ENCODE measurements at regions of chr16 and their contacts with region 1.

Region 1: DNA sequence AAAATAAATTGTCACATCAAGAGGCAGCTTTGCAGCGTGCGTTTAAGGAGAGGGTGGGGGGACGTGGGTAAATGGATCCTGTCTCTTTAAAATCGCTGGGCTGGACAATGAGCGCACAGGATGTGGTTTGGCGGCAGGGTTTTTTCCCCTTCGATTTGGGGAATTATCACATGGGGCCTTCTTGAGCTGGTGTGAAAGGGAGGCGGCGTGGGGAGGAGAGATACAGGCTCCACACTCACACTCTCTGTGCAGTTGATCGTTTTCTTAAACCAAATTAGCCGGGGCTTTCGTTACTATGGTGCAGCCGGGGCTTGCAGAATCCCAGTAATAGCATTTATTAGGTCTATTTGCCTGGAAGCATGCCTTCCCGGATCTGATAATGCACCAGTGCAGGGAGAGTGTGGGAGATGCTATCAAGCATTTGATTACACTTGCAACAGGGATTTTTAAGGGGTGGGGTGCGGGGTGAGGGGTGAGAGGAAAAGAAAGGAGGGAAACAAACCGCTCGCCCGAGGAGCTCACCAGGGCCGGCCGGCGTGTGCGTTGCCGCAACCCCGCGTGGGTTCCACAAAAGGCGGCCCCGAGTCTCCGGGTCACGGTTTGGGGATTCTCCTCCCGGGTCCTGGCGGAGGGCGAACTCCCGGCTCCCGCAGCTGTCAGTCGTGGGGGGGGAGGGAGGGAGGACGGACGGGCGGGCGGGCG is 58.9 kb upstream of the GSE1 start:
- DNase-seq: no peak
- H3K4me3 ChIP-seq: peak overlapping the region; percentile 74 to 85 (median 82)
- H3K27ac ChIP-seq: peak overlapping the region; percentile 79 to 88 (median 84)
- H3K4me1 ChIP-seq: peaks cover 31 to 75% (median 60%) of the 10 kb centered on the region in 4 donors
- H3K27me3 ChIP-seq: no peaks in the 10 kb centered on the region
- CTCF ChIP-seq: no peak
- EP300 ChIP-seq: no peak
- POLR2A ChIP-seq: no peak

Region 2: DNA sequence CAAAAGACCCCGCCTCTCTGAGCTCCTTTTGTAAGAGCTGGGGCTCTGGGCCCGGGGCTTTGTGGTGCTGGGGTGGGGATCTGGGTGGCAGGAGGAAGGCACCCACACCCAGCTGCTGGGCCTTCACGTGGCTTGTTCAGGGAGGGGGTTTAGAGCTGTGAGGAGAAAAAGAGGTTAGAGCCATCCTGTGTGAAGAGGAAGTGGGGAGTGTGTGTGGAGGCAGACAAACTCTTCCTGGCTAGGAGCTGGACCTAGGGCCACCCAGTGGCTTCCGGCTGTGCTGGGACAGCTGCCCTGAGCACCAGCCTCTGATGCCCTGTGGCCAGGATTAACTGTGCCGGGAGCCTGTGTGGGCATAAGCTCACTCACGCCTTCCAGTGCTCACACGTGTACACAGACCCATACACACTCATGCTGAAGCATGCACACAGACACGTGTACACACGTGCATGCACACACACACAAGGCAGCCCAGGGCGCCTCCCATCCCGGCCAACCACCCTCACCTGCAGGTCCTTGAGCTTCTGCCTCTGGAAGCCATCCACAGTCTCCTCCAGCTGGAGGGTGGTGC is 449.4 kb before region 1 on chr16:
- intact Hi-C with region 1: no loop called
- DNase-seq: no peak
- H3K4me3 ChIP-seq: no peak overlapping the region
- H3K27ac ChIP-seq: no peak overlapping the region
- H3K4me1 ChIP-seq: no peaks in the 10 kb centered on the region
- H3K27me3 ChIP-seq: no peaks in the 10 kb centered on the region
- CTCF ChIP-seq: no peak
- EP300 ChIP-seq: no peak
- POLR2A ChIP-seq: no peak

Region 3: DNA sequence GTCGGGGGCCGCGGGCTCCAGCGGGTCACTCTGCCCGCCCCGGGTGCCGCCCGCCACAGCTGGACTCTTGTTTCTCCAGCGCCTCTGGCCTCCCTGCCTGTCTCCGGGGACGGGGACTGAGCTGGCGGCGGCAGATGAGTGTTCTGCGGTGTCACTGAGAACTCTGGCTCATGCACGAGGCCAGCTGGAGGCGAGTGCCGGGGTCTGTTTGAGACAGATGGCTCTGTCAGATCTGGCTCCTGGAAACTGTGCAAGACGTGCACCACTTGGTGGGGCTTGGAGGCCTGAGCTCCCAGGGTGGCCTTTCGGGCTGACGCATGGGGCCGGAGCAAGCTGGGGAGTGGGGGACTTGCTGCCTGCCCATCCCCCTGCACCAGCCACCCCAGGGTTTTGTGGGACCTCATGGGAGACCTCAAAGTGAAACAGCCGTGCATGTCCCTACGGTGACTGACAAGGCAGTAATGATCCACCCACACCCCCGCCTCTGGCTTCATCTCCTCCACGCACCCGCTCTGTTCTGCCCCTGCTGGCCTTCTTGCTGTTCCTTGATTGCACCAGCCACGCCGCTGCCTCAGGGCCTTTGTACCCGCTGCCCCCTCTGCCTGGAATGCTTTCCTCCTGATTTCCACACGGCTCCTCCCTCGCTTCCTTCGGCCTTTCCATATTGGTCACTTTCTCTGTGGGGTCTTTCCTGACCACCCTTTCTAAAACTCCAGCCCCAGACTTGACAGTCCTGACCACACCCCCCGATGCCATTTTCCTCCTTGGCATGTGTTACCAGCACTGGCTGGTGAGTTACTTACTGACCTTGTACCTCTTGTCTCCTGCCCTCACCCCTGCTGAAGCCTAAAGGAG is 267.1 kb before region 1 on chr16:
- intact Hi-C with region 1: no loop called
- DNase-seq: no peak
- H3K4me3 ChIP-seq: peak overlapping the region in 2 of 4 donors; percentile 19
- H3K27ac ChIP-seq: peak overlapping the region in 3 of 4 donors; percentile 21 to 69 (median 33)
- H3K4me1 ChIP-seq: peaks cover 16 to 53% (median 42%) of the 10 kb centered on the region in 4 donors
- H3K27me3 ChIP-seq: no peaks in the 10 kb centered on the region
- CTCF ChIP-seq: no peak
- EP300 ChIP-seq: no peak
- POLR2A ChIP-seq: no peak

Region 4: GRCh38 chr16:85420501-85421337 is 133.5 kb before region 1 on chr16:
- intact Hi-C with region 1: loop called (anchors 5 kb)
- DNase-seq: no peak
- H3K4me3 ChIP-seq: no peak overlapping the region
- H3K27ac ChIP-seq: no peak overlapping the region
- H3K4me1 ChIP-seq: peaks cover 9 to 39% (median 31%) of the 10 kb centered on the region in 4 donors
- H3K27me3 ChIP-seq: no peaks in the 10 kb centered on the region
- CTCF ChIP-seq: peak in 2 of 3 experiments; percentile 99
- EP300 ChIP-seq: no peak
- POLR2A ChIP-seq: no peak

Measured in esophagus muscularis mucosa (tissue), 4 donors.